Ovary (tissue), 10 donors: ENCODE measurements at regions of chr5 and their contacts with region 1.

Region 1: GRCh38 chr5:113153512-113154097 is 177.0 kb downstream of the DCP2 start:
- DNase-seq: peak in 3 of 5 donors; percentile 40 to 48 (median 42)
- H3K4me3 ChIP-seq: no peak overlapping the region
- H3K27ac ChIP-seq: peak overlapping the region in 1 of 2 donors; percentile 93
- H3K4me1 ChIP-seq: peaks cover 38% of the 10 kb centered on the region
- H3K27me3 ChIP-seq: no peaks in the 10 kb centered on the region
- CTCF ChIP-seq: no peak
- EP300 ChIP-seq: no peak
- POLR2A ChIP-seq: no peak

Region 2: GRCh38 chr5:112951124-112951702 is 202.4 kb before region 1 on chr5:
- intact Hi-C with region 1: no loop called
- DNase-seq: no peak
- H3K4me3 ChIP-seq: no peak overlapping the region
- H3K27ac ChIP-seq: no peak overlapping the region
- H3K4me1 ChIP-seq: no peaks in the 10 kb centered on the region
- H3K27me3 ChIP-seq: no peaks in the 10 kb centered on the region
- CTCF ChIP-seq: no peak
- EP300 ChIP-seq: no peak
- POLR2A ChIP-seq: no peak

Region 3: GRCh38 chr5:113246361-113246870 is 92.8 kb after region 1 on chr5:
- intact Hi-C with region 1: loop called in 2 of 4 experiments (anchors 5 to 10 kb)
- DNase-seq: peak in 2 of 5 donors; percentile 42 to 49
- H3K4me3 ChIP-seq: no peak overlapping the region
- H3K27ac ChIP-seq: peak overlapping the region; percentile 63 to 82
- H3K4me1 ChIP-seq: peaks cover 31% of the 10 kb centered on the region
- H3K27me3 ChIP-seq: no peaks in the 10 kb centered on the region
- CTCF ChIP-seq: no peak
- EP300 ChIP-seq: no peak
- POLR2A ChIP-seq: no peak